ENCODE measurements at regions of chr5 and their contacts with region 1.

Region 1: DNA sequence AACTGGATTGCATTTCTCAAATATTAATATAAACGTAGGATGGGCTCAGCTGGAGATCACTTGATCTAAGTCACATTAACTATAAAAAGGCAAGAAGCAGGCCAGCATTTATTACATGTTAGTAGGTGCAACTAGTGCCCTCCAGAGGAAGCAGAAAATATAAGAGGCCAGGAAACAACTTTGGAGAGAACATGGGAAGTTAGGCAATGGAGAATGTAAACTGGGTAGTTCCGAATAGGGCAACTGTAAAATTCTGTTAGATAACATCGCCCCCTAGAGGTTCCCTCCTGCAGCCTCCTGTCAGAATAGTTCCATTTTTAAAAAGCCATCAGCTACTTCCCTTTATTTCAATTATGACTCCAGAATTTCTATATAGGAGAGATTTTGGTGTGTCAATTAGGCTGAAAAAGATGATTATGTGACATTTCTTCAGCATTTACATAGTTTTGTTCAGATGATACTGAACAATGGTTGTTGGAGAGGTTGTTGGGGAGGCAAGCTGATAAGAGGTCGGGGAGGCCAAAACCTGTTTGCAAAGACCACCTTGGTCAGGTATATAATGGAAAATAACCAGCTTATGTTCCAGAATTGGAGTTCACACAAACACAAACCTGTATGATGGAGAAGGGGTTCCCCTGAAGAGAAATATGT is 22.4 kb downstream of the CCL28 start:
- DNase-seq: peak; percentile 86
- H3K4me3 Mint-ChIP-seq: no peak overlapping the region
- H3K27ac Mint-ChIP-seq: no peak overlapping the region
- H3K4me1 Mint-ChIP-seq: peaks cover 26% of the 10 kb centered on the region
- H3K27me3 Mint-ChIP-seq: no peaks in the 10 kb centered on the region

Region 2: GRCh38 chr5:42908509-42909488 is 481.0 kb before region 1 on chr5:
- intact Hi-C with region 1: loop called (anchors 5 kb)
- DNase-seq: peak; percentile 96
- H3K4me3 Mint-ChIP-seq: peak overlapping the region; percentile 83
- H3K27ac Mint-ChIP-seq: peak overlapping the region; percentile 1
- H3K4me1 Mint-ChIP-seq: peaks cover 6% of the 10 kb centered on the region
- H3K27me3 Mint-ChIP-seq: peaks cover 35% of the 10 kb centered on the region

Region 3: GRCh38 chr5:43073597-43074546 is 315.9 kb before region 1 on chr5:
- intact Hi-C with region 1: loop called (anchors 1 kb)
- DNase-seq: peak; percentile 89
- H3K4me3 Mint-ChIP-seq: peak overlapping the region; percentile 7
- H3K27ac Mint-ChIP-seq: peak overlapping the region; percentile 79
- H3K4me1 Mint-ChIP-seq: peaks cover 38% of the 10 kb centered on the region
- H3K27me3 Mint-ChIP-seq: no peaks in the 10 kb centered on the region

Region 4: GRCh38 chr5:43191740-43192557 is 197.9 kb before region 1 on chr5 and contains the start of gene NIM1K:
- intact Hi-C with region 1: loop called (anchors 2 kb)
- DNase-seq: peak; percentile 85
- H3K4me3 Mint-ChIP-seq: peak within 1 kb of the TSS; percentile 86
- H3K27ac Mint-ChIP-seq: peak within 1 kb of the TSS; percentile 86
- H3K4me1 Mint-ChIP-seq: peaks cover 31% of the 10 kb centered on the region
- H3K27me3 Mint-ChIP-seq: peaks cover 15% of the 10 kb centered on the region
- total RNA-seq, gene NIM1K: 0.82 and 0.97 TPM in 2 replicates

Region 5: DNA sequence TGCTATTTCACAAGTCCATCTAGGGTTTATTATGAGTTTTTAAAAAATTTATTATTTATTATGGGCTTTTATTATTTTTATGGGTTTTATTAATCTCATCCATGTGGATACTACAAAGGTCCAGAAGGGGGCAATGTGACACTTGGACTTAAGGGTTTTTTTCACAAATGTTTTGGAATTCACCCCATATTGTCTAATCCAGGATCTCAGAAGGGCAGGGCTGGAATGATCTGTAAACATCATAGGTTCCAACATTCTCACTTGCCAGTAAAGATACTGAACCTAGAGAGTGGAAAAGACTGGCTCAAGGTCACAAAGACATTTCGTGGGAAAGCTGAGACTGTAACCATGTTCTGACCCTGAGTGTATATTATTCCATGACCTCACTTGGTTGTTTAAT is 162.1 kb before region 1 on chr5:
- intact Hi-C with region 1: loop called (anchors 2 kb)
- DNase-seq: no peak
- H3K4me3 Mint-ChIP-seq: no peak overlapping the region
- H3K27ac Mint-ChIP-seq: no peak overlapping the region
- H3K4me1 Mint-ChIP-seq: no peaks in the 10 kb centered on the region
- H3K27me3 Mint-ChIP-seq: no peaks in the 10 kb centered on the region

Region 6: GRCh38 chr5:43514816-43515677 is 125.2 kb after region 1 on chr5 and contains the start of gene C5orf34:
- intact Hi-C with region 1: loop called (anchors 10 kb)
- DNase-seq: peak; percentile 98
- H3K4me3 Mint-ChIP-seq: peak within 1 kb of the TSS; percentile 95
- H3K27ac Mint-ChIP-seq: peak within 1 kb of the TSS; percentile 96
- H3K4me1 Mint-ChIP-seq: peaks cover 23% of the 10 kb centered on the region
- H3K27me3 Mint-ChIP-seq: no peaks in the 10 kb centered on the region
- total RNA-seq, gene C5orf34: 6.8 and 8.7 TPM in 2 replicates

Measured in activated CD4-positive, alpha-beta T cell treated with anti-CD3 and anti-CD28 coated beads, Interleukin-2, amount 10 ng/mL, durations not matched to agents 24 days and 14 days (primary cell).